ENCODE measurements at regions of chr17 and their contacts with region 1.

Region 1: DNA sequence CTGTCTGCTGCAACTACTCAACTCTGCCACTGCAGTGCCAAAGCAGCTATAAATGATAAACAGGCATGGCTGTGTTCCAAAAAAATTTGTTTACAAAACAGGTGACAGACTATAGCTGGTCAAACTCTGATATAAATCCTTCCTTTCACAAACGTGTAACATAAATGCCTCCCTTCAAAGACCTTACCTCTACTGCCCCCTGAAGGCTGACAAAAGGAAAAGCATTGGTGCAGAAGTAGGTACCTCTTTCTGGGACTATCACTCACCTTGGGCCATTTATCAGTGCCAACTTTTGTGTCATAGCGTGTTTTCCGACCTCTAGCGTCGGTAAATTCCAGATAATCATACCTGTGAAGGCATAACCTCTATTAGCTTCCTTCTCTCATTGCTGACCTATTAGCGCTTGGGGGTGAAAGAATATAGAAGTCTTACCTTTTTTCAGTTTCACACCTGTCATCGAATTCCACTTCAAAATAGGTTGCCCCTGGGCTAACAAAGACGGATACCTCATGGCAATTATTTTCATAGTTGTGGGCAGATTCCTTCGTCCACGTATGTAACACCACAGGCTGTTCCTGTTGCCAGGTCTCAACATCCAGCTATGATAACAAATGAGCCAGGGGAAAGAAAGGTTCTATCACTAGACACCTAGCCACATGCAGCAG is 67.9 kb downstream of the ZZEF1 start:
- DNase-seq: peak; percentile 33
- ATAC-seq: peak; percentile 69; the same call in 1 of the 2 replicates
- H3K4me3 ChIP-seq: no peak overlapping the region
- H3K27ac ChIP-seq: no peak overlapping the region
- H3K4me1 ChIP-seq: no peaks in the 10 kb centered on the region
- H3K27me3 ChIP-seq: no peaks in the 10 kb centered on the region
- CTCF ChIP-seq: peak; percentile 78

Region 2: DNA sequence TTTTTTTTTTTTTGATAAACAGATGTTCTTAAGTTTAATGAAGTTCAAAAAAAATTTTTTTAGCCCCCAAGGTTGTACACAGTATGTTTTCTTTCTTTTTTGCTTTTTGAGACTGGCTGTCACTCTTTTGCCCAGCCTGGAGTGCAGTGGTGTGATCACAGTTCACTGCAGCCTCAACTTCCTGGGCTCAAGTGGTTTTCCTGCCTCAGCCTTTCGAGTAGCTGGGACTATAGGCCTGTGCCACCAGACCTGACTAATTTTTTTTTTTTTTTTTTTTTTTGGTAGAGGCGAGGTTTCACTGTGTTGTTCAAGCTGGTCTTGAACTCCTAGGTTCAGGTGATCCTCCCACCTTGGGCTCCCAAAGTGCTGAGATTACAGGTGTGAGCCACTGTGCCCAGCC is 286.8 kb before region 1 on chr17:
- CTCF ChIA-PET with region 1: no interaction called
- POLR2A ChIA-PET with region 1: no interaction called
- in situ Hi-C with region 1: no loop called
- intact Hi-C with region 1: no loop called
- DNase-seq: no peak
- ATAC-seq: no peak
- H3K4me3 ChIP-seq: no peak overlapping the region
- H3K27ac ChIP-seq: no peak overlapping the region
- H3K4me1 ChIP-seq: no peaks in the 10 kb centered on the region
- H3K27me3 ChIP-seq: no peaks in the 10 kb centered on the region
- CTCF ChIP-seq: no peak

Region 3: DNA sequence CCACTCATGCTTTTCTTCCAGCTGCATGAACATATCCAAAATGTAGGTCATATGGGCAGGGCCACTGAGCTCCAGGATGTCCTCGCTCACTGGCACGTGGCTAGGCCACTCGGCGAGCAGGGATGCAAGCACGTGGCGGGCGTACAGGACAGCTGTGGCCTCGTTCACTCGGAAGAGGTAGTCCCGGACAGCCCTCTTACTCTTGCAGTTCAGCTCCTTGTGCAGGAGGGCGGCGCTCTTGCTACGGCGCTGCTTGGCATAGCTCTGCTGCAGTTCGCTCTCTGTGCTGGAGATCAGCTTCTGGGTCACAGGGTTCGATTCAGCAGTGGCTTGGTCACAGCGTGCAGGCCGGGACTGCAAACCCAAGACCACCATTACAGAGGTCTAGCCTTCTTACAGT is 57.6 kb before region 1 on chr17:
- CTCF ChIA-PET with region 1: no interaction called
- POLR2A ChIA-PET with region 1: interaction called, 14 read pairs
- in situ Hi-C with region 1: no loop called
- intact Hi-C with region 1: no loop called
- DNase-seq: no peak
- ATAC-seq: no peak
- H3K4me3 ChIP-seq: no peak overlapping the region
- H3K27ac ChIP-seq: no peak overlapping the region
- H3K4me1 ChIP-seq: no peaks in the 10 kb centered on the region
- H3K27me3 ChIP-seq: no peaks in the 10 kb centered on the region
- CTCF ChIP-seq: peak; percentile 61; the same call in 1 of the 2 replicates

Region 4: GRCh38 chr17:4064366-4064765 is 10.6 kb before region 1 on chr17:
- CTCF ChIA-PET with region 1: interaction called, 10 read pairs
- POLR2A ChIA-PET with region 1: no interaction called
- in situ Hi-C with region 1: no loop called
- intact Hi-C with region 1: no loop called
- DNase-seq: no peak
- ATAC-seq: no peak
- H3K4me3 ChIP-seq: no peak overlapping the region
- H3K27ac ChIP-seq: no peak overlapping the region
- H3K4me1 ChIP-seq: no peaks in the 10 kb centered on the region
- H3K27me3 ChIP-seq: no peaks in the 10 kb centered on the region
- CTCF ChIP-seq: no peak

Measured in Panc1 (cell line).